Psoas muscle (tissue), 8 donors: ENCODE measurements at regions of chr6 and their contacts with region 1.

Region 1: DNA sequence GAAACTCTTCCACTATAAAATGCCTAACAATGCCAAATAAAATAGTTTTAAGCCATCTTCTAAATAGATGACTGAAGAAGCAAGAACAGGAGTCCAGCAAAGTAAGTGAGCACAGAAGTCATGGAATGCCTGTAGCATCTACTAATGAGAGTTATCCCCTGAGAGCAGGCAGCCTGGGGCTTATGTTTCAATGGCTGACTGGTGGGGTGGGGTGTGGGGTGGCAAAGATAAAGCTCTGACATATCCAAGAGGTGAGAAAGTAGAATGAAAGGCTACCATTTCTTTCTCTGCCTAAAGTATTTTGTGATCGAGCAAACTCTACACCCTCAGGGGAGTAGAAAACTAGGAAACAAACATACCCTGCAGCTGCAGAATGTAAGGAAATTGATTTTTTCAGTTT is 348.8 kb downstream of the TFAP2B start:
- DNase-seq: no peak
- ATAC-seq: no peak
- H3K4me3 ChIP-seq: no peak overlapping the region
- H3K27ac ChIP-seq: no peak overlapping the region
- H3K4me1 ChIP-seq: no peaks in the 10 kb centered on the region
- H3K27me3 ChIP-seq: no peaks in the 10 kb centered on the region
- CTCF ChIP-seq: no peak

Region 2: GRCh38 chr6:49570474-49571079 is 1596.9 kb before region 1 on chr6:
- intact Hi-C with region 1: loop called in 1 of 2 experiments (anchors 5 kb)
- DNase-seq: no peak
- ATAC-seq: no peak
- H3K4me3 ChIP-seq: no peak overlapping the region
- H3K27ac ChIP-seq: no peak overlapping the region
- H3K4me1 ChIP-seq: no peaks in the 10 kb centered on the region
- H3K27me3 ChIP-seq: no peaks in the 10 kb centered on the region
- CTCF ChIP-seq: no peak

Region 3: GRCh38 chr6:51213811-51214210 is 46.3 kb after region 1 on chr6:
- intact Hi-C with region 1: no loop called
- DNase-seq: no peak
- ATAC-seq: no peak
- H3K4me3 ChIP-seq: no peak overlapping the region
- H3K27ac ChIP-seq: no peak overlapping the region
- H3K4me1 ChIP-seq: no peaks in the 10 kb centered on the region
- H3K27me3 ChIP-seq: no peaks in the 10 kb centered on the region
- CTCF ChIP-seq: no peak